ENCODE measurements at regions of chr18 and their contacts with region 1.

Region 1: DNA sequence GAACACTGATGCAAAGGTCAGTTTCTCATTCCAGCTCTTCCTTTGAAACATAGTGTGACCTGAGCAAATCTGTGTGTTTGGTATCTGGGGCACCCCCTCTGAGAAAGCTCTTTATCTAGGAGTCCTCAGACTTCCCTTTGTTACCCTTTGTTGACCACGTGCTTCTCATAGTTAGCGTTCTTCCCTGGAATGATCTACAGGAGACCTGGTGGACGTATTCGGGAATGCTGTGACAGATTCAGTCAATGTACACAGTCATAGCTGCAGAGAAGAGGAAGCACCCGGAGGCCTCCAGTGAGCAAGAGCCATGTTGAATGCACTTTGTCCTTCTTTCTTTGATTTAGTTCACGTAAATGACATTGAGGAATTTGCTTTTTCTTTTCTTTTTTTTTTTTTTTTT is 10.7 kb upstream of the CHMP1B start:
- DNase-seq: peak; percentile 94 to 96
- H3K4me3 ChIP-seq: no peak overlapping the region
- H3K4me3 Mint-ChIP-seq: peak overlapping the region; percentile 65
- H3K27ac Mint-ChIP-seq: peak overlapping the region; percentile 98
- H3K4me1 ChIP-seq: peaks cover 59% of the 10 kb centered on the region
- H3K4me1 Mint-ChIP-seq: peaks cover 40% of the 10 kb centered on the region
- H3K27me3 ChIP-seq: no peaks in the 10 kb centered on the region
- H3K27me3 Mint-ChIP-seq: no peaks in the 10 kb centered on the region
- CTCF ChIP-seq: peak; percentile 26 to 33

Region 2: GRCh38 chr18:11733031-11733430 is 107.5 kb before region 1 on chr18:
- CTCF ChIA-PET with region 1: interaction called, 11 read pairs
- POLR2A ChIA-PET with region 1: no interaction called
- intact Hi-C with region 1: no loop called
- DNase-seq: peak; percentile 81 to 88
- H3K4me3 ChIP-seq: no peak overlapping the region
- H3K4me3 Mint-ChIP-seq: no peak overlapping the region
- H3K27ac Mint-ChIP-seq: no peak overlapping the region
- H3K4me1 ChIP-seq: peaks cover 4% of the 10 kb centered on the region; the same call in 1 of the 2 replicates
- H3K4me1 Mint-ChIP-seq: no peaks in the 10 kb centered on the region
- H3K27me3 ChIP-seq: no peaks in the 10 kb centered on the region
- H3K27me3 Mint-ChIP-seq: no peaks in the 10 kb centered on the region
- CTCF ChIP-seq: peak; percentile 92 to 96

Region 3: DNA sequence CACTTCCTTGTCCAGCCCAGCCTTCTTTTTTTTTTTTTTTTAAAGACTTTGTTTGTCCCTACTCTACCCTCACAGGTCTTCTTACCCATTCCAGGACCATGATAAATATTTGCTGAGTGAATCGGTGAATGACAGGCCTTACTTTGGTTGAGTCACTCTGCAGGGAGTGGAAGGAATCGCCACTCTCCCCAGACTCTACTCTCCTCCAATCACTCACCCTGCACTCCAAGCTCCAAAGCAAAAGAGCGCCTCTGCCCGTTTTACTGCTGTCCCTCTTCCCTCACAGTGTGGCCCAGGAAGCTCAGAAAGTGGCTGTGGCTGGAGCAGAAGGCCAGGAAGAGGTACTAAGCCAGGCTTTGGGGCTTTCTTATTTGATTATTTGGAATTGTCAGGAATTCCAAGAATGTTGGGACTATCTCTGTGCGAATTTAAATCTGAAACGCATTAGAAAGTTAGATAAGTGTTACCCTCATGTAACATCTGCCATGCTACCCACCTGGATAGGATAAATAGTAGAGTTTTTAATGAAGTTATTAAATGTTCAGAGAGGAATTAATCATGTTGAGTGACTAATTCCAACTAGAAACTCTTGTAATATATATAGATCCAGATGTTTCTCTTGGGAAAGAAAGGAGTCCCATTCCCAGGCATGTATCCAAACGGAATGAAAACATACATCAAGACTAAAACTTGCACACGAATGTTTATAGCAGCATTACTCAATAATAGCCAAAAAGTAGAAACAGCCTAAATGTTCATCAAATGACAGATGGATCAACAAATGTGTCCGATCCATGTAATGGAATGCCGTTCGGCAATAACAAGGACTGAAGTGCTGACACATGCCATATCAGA is 32.3 kb before region 1 on chr18:
- CTCF ChIA-PET with region 1: interaction called, 11 read pairs
- POLR2A ChIA-PET with region 1: interaction called, 20 read pairs
- intact Hi-C with region 1: loop called (anchors 1 kb)
- DNase-seq: peak; percentile 66 to 71
- H3K4me3 ChIP-seq: no peak overlapping the region
- H3K4me3 Mint-ChIP-seq: peak overlapping the region; percentile 51
- H3K27ac Mint-ChIP-seq: peak overlapping the region; percentile 79
- H3K4me1 ChIP-seq: peaks cover 56% of the 10 kb centered on the region
- H3K4me1 Mint-ChIP-seq: peaks cover 42% of the 10 kb centered on the region
- H3K27me3 ChIP-seq: no peaks in the 10 kb centered on the region
- H3K27me3 Mint-ChIP-seq: no peaks in the 10 kb centered on the region
- CTCF ChIP-seq: no peak

Region 4: GRCh38 chr18:11826836-11827235 is 13.7 kb before region 1 on chr18:
- CTCF ChIA-PET with region 1: interaction called, 10 read pairs
- POLR2A ChIA-PET with region 1: interaction called, 5 read pairs
- intact Hi-C with region 1: no loop called
- DNase-seq: no peak
- H3K4me3 ChIP-seq: no peak overlapping the region
- H3K4me3 Mint-ChIP-seq: no peak overlapping the region
- H3K27ac Mint-ChIP-seq: peak overlapping the region; percentile 65
- H3K4me1 ChIP-seq: peaks cover 28% of the 10 kb centered on the region
- H3K4me1 Mint-ChIP-seq: peaks cover 20% of the 10 kb centered on the region
- H3K27me3 ChIP-seq: no peaks in the 10 kb centered on the region
- H3K27me3 Mint-ChIP-seq: no peaks in the 10 kb centered on the region
- CTCF ChIP-seq: no peak

Region 5: DNA sequence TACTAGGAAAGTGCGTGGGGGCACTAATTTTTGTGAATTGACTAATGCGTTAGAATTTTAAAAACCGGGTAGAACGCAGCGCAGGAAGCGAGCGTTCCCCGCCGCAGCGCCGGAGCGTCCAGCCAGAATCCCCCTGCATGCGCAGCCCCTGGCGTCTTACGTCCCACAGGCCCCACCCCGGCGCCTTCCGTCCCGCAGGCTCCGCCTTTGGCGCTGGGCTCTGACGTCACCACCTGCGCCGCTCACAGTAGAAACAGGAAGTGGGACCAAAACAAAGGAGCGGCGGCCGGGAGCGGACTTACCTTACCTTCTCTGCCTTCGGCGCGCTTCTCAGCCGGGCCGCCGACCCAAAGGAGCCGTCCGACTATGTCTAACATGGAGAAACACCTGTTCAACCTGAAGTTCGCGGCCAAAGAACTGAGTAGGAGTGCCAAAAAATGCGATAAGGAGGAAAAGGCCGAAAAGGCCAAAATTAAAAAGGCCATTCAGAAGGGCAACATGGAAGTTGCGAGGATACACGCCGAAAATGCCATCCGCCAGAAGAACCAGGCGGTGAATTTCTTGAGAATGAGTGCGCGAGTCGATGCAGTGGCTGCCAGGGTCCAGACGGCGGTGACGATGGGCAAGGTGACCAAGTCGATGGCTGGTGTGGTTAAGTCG is 10.8 kb after region 1 on chr18 and contains the start of gene CHMP1B:
- CTCF ChIA-PET with region 1: interaction called, 8 read pairs
- POLR2A ChIA-PET with region 1: interaction called, 70 read pairs
- intact Hi-C with region 1: loop called (anchors 1 kb)
- DNase-seq: peak; percentile 96 to 97
- H3K4me3 ChIP-seq: peak within 1 kb of the TSS; percentile 91
- H3K4me3 Mint-ChIP-seq: peak within 1 kb of the TSS; percentile 93
- H3K27ac Mint-ChIP-seq: peak within 1 kb of the TSS; percentile 93
- H3K4me1 ChIP-seq: peaks cover 47% of the 10 kb centered on the region
- H3K4me1 Mint-ChIP-seq: peaks cover 13% of the 10 kb centered on the region
- H3K27me3 ChIP-seq: no peaks in the 10 kb centered on the region
- H3K27me3 Mint-ChIP-seq: no peaks in the 10 kb centered on the region
- CTCF ChIP-seq: no peak
- total RNA-seq, gene CHMP1B: 45.2 and 56.5 TPM in 2 replicates

Region 6: DNA sequence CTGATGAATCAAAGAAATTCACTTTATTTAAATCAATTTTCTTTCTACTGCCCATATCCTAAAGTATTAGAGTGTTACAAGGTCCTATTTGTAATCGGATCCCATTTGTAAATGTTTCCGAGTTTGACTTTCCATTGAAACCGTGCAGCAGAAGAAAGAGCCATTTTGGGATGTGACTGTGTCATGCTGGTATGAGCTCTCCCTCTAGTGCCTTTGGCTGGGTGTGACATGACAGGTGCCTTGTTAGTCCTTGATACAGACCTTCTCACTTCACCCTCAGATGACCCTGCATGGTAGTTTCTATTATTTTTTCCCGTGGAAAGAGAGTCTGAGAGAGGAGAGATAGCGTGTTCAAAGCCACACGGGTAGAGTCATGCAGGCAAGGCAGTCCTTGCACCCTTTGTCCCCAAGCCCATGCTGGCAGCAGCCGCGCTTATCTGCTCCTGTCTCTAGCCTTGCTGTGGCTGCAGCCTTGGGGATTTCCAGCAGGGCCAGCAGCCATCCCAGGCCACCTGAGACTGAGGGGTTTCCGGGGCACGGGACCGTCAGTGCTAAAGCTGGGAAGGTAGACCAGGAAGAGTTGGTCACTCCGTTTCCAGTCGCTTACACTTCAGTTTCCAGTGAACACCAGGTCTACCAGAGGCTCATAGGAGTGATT is 32.1 kb after region 1 on chr18:
- CTCF ChIA-PET with region 1: interaction called, 7 read pairs
- POLR2A ChIA-PET with region 1: interaction called, 7 read pairs
- intact Hi-C with region 1: loop called (anchors 1 kb)
- DNase-seq: peak; percentile 68 to 71
- H3K4me3 ChIP-seq: no peak overlapping the region
- H3K4me3 Mint-ChIP-seq: no peak overlapping the region
- H3K27ac Mint-ChIP-seq: no peak overlapping the region
- H3K4me1 ChIP-seq: peaks cover 10% of the 10 kb centered on the region; the same call in 1 of the 2 replicates
- H3K4me1 Mint-ChIP-seq: peaks cover 7% of the 10 kb centered on the region
- H3K27me3 ChIP-seq: no peaks in the 10 kb centered on the region
- H3K27me3 Mint-ChIP-seq: no peaks in the 10 kb centered on the region
- CTCF ChIP-seq: peak; percentile 74 to 80

Region 7: DNA sequence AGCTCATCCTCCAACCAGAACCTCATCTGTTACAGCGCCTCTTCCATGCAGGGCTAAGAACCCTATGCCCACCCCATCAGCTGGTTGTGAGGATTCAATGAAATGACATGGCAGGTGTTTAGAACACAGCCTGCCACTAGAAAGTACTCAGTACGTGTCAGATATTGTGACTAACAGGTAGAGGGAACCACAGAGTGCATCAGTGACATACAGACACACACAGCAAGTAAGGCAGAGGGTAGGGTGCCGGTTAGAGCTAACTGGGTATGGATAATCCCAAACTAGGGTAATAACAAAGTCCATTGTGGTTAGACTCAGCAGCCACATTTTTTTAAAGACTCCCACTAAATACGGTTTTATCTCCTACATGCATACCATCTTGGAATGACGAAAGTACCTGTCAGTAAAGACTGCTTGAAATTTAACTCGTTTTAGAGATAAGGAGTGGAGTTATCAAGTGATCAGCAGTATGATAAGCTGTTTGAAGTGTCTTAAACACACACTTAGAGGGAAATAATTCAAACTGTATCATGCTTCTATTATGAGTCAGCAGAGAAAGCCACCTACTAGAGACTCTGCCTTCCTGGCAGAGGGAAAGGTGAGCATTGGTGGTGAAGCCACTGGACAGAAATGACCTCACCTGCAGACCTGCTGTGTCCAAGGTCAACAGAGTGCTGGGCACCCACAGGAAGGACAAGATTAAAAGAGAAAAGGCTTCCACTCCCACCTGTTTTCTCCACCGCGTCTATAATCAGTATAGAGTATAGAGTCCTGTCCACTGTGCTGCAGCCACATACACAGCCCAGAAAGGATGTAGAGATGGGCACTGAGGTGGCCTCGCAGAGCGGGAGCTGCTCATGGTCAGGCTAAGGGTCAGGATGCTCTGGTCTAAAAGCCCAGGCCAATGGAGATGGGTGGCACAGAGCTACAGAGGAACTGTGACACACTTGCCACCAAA is 47.1 kb after region 1 on chr18:
- CTCF ChIA-PET with region 1: interaction called, 4 read pairs
- POLR2A ChIA-PET with region 1: interaction called, 3 read pairs
- intact Hi-C with region 1: loop called (anchors 1 kb)
- DNase-seq: peak; percentile 82 to 89
- H3K4me3 ChIP-seq: no peak overlapping the region
- H3K4me3 Mint-ChIP-seq: peak overlapping the region; percentile 12
- H3K27ac Mint-ChIP-seq: peak overlapping the region; percentile 78
- H3K4me1 ChIP-seq: peaks cover 54% of the 10 kb centered on the region
- H3K4me1 Mint-ChIP-seq: peaks cover 34% of the 10 kb centered on the region
- H3K27me3 ChIP-seq: no peaks in the 10 kb centered on the region
- H3K27me3 Mint-ChIP-seq: no peaks in the 10 kb centered on the region
- CTCF ChIP-seq: no peak

Measured in Caco-2 (cell line).